Right ventricle myocardium inferior (tissue), 1 donor: ENCODE measurements at regions of chr1 and their contacts with region 1.

Region 1: DNA sequence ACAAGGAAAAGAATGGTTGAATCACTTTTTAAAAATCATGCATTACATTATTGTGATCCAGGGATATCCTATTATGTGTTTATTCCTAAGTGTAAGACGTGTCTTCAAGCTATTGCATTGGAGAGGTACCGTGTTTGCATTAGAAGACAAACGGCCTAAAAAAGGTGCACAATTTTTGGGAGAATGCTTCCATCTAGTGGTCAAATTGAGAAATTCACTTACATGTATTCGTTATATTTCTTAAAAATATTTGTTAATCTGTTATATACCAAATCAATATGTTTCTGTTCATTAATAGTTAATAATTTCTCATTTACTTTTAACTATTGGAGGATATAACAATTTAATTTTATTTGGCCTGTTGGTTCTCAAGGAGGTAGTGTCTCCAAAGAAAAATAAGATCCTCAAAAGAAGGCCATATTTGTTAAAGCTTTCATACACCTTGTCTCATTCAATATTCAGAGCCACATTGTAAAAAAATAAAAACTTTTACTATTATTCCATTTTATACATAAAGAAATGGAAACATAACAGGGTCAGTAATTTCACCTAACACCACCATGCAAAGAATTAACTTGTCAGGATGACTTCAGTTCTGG is 40.5 kb upstream of the KCTD3 start:
- DNase-seq: no peak
- ATAC-seq: no peak

Region 2: DNA sequence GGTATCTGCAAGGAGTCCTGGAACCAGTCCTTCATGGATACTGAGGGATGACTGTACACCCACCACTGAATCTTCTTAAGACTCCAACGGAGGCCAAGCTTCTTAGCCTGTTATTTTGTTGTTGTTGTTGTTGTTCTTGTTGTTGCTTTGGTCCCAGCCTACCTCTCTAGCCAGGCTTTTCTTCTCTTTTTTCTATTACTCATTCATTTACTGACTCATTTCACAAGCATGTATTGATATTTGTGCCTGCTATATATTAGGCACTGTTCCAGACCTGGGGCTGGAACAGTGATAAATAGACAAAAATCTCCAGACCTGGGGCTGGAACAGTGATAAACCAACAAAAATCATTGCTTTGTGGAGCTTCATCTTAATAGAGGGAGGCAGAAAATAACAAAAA is 903.2 kb before region 1 on chr1:
- intact Hi-C with region 1: loop called (anchors 10 kb)
- DNase-seq: no peak
- ATAC-seq: no peak

Region 3: GRCh38 chr1:214660862-214661261 is 865.8 kb before region 1 on chr1:
- intact Hi-C with region 1: loop called (anchors 5 kb)
- DNase-seq: no peak
- ATAC-seq: no peak

Region 4: GRCh38 chr1:215358356-215358755 is 168.3 kb before region 1 on chr1:
- intact Hi-C with region 1: no loop called
- DNase-seq: no peak
- ATAC-seq: no peak